ENCODE measurements at regions of chr15 and their contacts with region 1.

Region 1: GRCh38 chr15:57306161-57306943 is 70.0 kb upstream of the CGNL1 start:
- DNase-seq: peak; percentile 88
- ATAC-seq: peak; percentile 86 to 90

Region 2: DNA sequence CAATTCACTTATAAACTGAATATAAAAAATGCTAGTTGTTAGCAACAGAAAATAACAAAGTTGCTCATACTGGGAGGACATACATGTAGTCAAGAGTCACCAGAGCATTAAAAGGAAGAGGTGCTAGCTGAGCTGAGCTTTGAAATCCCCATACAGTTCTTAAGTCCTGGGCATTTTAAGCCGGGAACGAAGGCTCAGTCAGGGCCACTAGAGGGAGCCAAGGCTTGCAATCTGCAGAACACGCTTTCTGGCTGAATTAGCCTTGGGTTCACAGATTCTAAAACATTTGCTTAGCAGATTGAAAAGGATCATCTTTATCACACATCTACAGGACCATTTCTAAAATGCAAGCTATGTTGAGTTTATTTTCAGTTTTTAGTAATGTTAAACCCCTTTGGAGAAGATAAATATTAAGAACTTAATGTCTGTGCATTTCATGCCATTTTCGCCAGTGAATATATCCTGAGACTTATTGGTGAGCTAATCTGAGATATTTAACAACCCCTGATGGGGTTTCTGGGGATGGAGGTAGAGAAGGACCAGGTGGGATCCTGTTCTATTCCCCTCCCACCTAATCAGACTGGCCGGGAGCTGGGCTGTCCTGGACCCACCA is 815.1 kb before region 1 on chr15:
- intact Hi-C with region 1: loop called (anchors 5 to 10 kb)
- DNase-seq: peak; percentile 58
- ATAC-seq: peak; percentile 57 to 75

Region 3: DNA sequence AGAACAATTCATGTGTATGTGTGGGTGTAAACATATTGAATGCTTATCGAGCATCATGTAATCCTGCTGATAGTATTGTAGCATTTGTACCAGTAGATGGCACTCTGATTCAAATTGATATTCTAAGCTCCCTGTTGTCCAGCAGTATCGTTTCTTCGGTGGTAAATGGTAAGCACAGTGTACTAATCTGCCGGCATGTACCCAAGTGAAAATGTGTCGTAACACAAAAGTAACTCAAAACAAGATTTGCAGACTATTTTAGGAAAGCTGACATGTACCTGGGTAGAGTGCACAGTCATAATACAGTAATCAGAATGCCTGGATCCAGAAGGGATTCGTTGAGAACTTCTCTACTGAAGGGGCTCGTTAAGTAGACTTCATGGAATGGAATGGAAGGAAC is 809.7 kb before region 1 on chr15:
- intact Hi-C with region 1: loop called (anchors 5 to 10 kb)
- DNase-seq: no peak
- ATAC-seq: peak; percentile 81 to 84

Region 4: GRCh38 chr15:56821721-56822425 is 484.5 kb before region 1 on chr15:
- intact Hi-C with region 1: loop called in 1 of 2 experiments (anchors 10 kb)
- DNase-seq: peak; percentile 36
- ATAC-seq: peak; percentile 76 to 88

Region 5: DNA sequence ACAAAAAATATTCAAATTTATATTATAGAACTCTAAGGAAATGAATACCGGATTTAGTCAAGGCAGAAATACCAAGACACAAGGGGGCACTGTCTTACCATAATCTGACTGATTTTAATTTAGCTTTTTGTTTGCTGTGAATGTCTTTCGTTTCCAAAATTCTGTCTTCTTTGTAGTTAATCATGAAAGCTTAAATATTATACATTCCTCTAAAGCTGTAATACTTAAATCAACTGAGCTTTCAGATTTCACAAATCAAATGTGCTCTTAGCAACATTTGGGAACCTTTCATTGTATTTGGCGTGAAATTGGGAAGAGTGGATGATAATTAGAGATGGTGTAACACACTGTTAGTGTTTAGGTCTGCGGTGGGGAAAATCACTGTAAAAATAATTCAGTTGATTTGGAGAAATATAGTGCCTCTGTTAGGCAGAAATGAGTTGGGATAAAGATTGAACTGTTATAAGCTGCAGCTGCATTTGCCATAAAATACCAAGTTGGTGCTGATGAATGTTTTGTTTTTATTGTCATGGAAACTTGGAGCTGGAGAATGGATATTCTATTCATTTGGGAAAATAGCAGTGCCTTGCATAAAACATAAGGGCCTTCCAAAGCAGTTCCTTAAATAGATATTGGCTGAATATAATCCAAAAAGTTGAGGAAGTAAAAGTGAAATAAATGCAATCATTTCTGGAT is 159.7 kb before region 1 on chr15:
- intact Hi-C with region 1: loop called in 1 of 2 experiments (anchors 5 kb)
- DNase-seq: no peak
- ATAC-seq: peak; percentile 53 to 75